ENCODE measurements at regions of chr20 and their contacts with region 1.

Region 1: GRCh38 chr20:48769069-48769879 is 58.5 kb downstream of the PREX1 start:
- DNase-seq: peak; percentile 59
- H3K4me3 Mint-ChIP-seq: peak overlapping the region; percentile 43
- H3K27ac Mint-ChIP-seq: peak overlapping the region; percentile 82
- H3K4me1 Mint-ChIP-seq: peaks cover 69% of the 10 kb centered on the region
- H3K27me3 Mint-ChIP-seq: no peaks in the 10 kb centered on the region

Region 2: GRCh38 chr20:48668451-48668952 is 100.8 kb before region 1 on chr20:
- intact Hi-C with region 1: no loop called
- DNase-seq: no peak
- H3K4me3 Mint-ChIP-seq: no peak overlapping the region
- H3K27ac Mint-ChIP-seq: no peak overlapping the region
- H3K4me1 Mint-ChIP-seq: no peaks in the 10 kb centered on the region
- H3K27me3 Mint-ChIP-seq: no peaks in the 10 kb centered on the region

Region 3: GRCh38 chr20:48706173-48707015 is 62.9 kb before region 1 on chr20:
- intact Hi-C with region 1: no loop called
- DNase-seq: no peak
- H3K4me3 Mint-ChIP-seq: no peak overlapping the region
- H3K27ac Mint-ChIP-seq: no peak overlapping the region
- H3K4me1 Mint-ChIP-seq: peaks cover 20% of the 10 kb centered on the region
- H3K27me3 Mint-ChIP-seq: no peaks in the 10 kb centered on the region

Region 4: DNA sequence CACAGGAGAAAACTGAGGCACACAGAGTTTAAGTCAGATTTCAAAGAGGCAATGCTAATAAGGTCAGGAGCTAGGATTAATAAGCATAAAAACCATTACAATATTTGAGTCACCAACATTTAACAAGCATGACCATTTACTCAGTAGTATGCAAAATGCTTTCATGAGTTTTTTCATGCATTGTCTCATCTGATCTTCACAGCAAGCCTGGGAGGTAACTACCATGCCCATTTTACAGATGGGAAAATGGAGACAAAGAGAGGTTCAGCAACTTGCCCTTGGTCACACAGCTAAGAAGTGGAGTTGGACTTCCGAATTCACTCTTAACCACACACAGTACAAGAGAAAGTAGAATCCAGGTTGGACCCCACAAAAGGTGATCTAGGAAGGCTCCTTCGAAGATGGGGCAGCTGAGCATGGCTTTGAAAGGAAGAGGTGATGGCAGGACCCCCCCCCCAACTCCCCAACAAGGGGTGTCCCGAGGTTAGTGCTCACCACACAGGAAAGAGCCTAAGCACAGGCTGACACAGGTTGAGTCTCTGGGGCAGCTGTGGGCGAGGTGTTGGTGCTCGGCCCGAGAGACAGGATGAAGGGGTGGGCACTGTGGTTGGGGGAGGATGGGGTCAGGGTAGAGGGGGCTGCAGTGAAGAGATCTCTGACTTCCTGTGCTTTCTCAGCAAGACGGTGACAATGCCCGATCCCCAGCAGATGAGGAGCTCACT is 50.3 kb before region 1 on chr20:
- intact Hi-C with region 1: loop called (anchors 2 kb)
- DNase-seq: no peak
- H3K4me3 Mint-ChIP-seq: peak overlapping the region; percentile 64
- H3K27ac Mint-ChIP-seq: peak overlapping the region; percentile 85
- H3K4me1 Mint-ChIP-seq: peaks cover 66% of the 10 kb centered on the region
- H3K27me3 Mint-ChIP-seq: no peaks in the 10 kb centered on the region

Region 5: DNA sequence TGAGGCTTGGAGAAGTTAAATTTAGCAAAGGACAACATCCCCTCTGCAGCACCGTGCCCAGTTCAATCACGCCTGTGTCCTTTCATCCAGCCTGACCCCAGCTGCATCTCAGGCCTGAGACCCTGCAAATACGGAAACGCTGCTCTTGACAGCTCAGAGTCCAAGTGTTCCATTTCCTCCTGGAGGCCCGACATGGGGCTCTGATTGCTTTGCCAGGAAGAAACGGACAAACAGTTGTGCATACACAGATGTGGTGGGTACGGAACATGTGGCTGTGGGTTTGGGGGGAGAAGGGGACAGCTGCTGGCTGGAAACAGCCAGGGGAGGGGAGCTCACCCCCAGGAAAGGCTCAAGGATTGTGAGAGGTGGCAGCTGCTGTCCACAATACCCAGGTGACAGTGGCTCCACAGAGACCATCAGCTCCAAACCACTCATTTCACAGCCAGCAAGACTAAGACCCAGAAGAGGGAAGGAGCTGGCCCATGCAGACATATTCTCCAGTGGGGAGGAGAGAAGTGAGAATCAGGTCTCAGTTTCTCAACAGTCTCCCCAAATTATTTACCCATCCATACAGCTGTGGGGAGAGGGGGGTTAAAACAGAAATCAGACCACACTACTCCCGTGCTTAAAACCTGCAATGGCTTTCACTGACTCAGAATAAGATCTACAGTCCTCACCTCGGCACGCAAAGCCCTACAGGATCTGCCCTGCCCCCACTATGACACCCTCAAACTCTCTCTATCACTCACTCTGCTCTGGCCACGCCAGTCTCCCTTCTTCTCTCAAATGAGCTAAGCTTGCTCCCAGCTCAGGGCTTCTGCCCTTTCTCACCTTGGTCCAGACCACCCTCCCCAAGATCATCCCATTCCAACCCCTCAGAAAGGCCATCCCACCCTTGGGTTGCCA is 30.6 kb before region 1 on chr20:
- intact Hi-C with region 1: loop called (anchors 1 kb)
- DNase-seq: peak; percentile 70
- H3K4me3 Mint-ChIP-seq: peak overlapping the region; percentile 62
- H3K27ac Mint-ChIP-seq: peak overlapping the region; percentile 89
- H3K4me1 Mint-ChIP-seq: peaks cover 54% of the 10 kb centered on the region
- H3K27me3 Mint-ChIP-seq: no peaks in the 10 kb centered on the region

Region 6: DNA sequence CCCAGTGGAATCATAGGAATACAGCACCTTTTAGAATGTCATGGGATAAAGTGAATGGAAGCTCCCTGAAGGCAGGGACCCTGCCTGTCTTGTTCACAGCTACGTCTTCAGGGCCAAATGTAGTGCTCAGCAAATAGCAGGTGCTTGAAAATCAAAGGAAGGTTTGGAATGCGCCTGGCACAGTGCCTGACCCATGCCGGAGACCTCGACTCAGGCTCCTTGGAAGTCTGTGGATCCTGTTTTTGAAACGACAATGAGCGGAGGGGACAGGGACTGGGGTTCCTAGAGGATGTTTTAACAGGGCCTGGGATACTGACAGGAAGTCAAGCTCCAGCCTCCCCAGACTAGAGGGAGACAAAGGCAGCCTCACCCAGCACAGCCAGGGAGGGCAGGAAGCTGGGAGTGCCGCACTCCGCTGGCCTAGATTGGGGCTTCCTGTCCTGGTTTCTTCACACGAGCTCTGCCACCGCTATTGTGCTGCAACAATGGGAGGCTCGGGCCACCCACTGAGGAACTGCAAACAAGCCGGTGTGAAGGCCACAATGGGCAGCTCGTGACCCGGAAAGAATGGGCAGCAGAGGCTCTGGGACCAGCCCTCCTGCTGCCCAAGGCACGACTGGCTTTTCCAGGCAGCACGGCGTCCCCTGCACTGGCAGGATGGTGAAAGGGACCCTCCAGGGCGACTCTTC is 18.2 kb before region 1 on chr20:
- intact Hi-C with region 1: no loop called
- DNase-seq: no peak
- H3K4me3 Mint-ChIP-seq: no peak overlapping the region
- H3K27ac Mint-ChIP-seq: peak overlapping the region; percentile 18
- H3K4me1 Mint-ChIP-seq: peaks cover 46% of the 10 kb centered on the region
- H3K27me3 Mint-ChIP-seq: no peaks in the 10 kb centered on the region

Region 7: GRCh38 chr20:48846498-48847485 is 77.5 kb after region 1 on chr20:
- intact Hi-C with region 1: loop called (anchors 1 kb)
- DNase-seq: no peak
- H3K4me3 Mint-ChIP-seq: no peak overlapping the region
- H3K27ac Mint-ChIP-seq: peak overlapping the region; percentile 93
- H3K4me1 Mint-ChIP-seq: peaks cover 27% of the 10 kb centered on the region
- H3K27me3 Mint-ChIP-seq: peaks cover 14% of the 10 kb centered on the region